Activated T-helper 2 cell treated with anti-CD3 and anti-CD28 coated beads, Interferon-gamma antibody, Interleukin-2, Interleukin-4, amounts not matched to agents 10 μg/mL and 5 μg/mL and 100 μg/mL, durations not matched to agents 14 hours and 24 hours and 36 hours (primary cell): ENCODE measurements at regions of chr11 and their contacts with region 1.

Region 1: GRCh38 chr11:119356349-119357031 is 10.0 kb upstream of the MFRP start:
- DNase-seq: peak; percentile 68
- H3K4me3 Mint-ChIP-seq: peak overlapping the region; percentile 82
- H3K27ac Mint-ChIP-seq: peak overlapping the region; percentile 71
- H3K4me1 Mint-ChIP-seq: peaks cover 17% of the 10 kb centered on the region
- H3K27me3 Mint-ChIP-seq: peaks cover 12% of the 10 kb centered on the region

Region 2: DNA sequence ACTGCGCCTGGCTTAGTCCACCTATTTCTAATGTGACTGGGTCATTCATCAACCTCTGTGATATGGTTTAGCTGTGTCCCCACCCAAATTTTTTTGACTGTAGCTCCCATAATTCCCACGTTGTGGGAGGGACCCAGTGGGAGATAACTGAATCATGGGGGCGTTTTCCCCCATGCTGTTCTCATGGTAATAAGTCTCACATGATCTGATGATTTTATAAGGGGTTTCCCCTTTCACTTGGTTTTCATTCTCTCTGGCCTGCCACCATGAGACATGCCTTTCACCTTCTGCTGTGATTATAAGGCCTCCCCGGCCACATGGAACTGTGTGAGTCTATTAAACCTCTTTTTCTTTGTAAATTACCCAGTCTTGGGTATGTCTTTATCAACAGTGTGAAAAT is 349.8 kb before region 1 on chr11:
- intact Hi-C with region 1: no loop called
- DNase-seq: no peak
- H3K4me3 Mint-ChIP-seq: no peak overlapping the region
- H3K27ac Mint-ChIP-seq: no peak overlapping the region
- H3K4me1 Mint-ChIP-seq: peaks cover 2% of the 10 kb centered on the region
- H3K27me3 Mint-ChIP-seq: no peaks in the 10 kb centered on the region

Region 3: DNA sequence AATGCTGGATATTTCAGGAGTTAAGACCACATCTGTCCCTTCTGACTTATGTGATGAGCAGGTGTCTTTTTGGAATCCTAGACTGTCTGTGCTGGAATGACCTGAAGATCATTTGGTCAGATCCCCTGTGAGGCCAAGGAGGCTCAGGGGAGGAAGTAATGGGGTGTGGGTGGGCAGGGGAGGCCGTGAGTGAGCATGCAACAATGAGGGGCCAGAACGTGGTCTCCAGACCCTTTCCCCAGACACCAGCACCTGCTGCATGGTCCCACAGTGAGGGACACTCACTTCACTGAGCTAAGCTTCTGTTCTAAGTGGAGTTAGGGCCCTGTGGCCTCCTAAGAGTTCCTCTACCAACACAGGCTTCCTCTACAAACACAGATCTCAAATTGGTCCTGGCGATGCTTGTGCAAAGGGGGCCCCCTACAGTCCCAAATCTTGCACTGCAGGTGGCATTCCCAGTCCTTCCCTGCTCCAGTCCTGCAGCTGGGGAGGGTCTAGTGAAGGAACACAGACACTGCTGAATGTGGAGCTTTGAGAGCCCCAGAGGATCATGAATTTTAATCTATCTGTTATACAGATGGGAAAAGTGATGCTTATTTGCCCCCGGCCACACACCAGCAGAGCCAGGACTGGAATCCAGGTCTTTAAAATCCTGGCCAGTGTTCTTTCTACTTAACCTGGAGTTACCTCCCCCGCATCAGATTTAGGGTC is 17.6 kb after region 1 on chr11:
- intact Hi-C with region 1: loop called (anchors 1 kb)
- DNase-seq: no peak
- H3K4me3 Mint-ChIP-seq: no peak overlapping the region
- H3K27ac Mint-ChIP-seq: no peak overlapping the region
- H3K4me1 Mint-ChIP-seq: peaks cover 4% of the 10 kb centered on the region
- H3K27me3 Mint-ChIP-seq: no peaks in the 10 kb centered on the region

Region 4: DNA sequence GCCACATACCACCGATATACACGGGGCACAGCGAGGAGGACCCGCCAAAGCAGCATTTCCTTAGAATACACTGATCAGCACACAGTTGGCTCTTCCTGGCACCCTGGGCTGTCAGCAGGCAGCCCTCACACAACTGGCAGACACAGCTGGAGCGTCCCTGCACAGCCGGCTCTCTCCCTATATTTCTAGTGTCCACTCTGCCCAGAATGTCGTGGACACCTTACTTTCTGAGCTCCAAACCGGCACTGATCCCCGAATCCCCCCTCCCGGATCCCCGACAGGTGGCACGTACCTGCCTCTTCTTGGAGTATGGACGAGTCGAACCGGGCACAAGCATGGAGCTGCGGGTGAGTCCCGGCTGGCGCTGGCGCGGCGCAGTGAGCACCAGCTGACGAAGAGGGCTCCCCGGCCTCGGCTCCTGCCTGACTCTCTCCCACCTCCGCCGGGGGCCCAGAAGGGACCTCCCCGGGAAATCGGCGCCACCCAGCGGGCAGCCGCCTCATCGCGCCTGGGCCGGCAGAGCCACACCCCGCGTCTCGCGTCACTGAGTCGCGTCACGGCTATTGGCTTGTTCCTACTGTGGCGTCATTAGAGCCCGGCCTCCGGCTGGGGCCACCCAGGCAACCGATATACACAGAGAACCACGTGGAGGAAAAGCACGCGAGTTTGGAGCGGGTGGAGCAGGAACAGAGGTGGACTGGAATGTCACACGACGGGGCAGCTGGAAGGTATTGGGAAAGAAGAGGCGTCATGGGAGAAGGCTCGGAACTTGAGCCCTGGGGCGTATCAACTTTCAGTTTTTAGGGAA is 24.9 kb after region 1 on chr11 and contains the start of gene USP2:
- intact Hi-C with region 1: loop called (anchors 1 kb)
- DNase-seq: peak; percentile 95
- H3K4me3 Mint-ChIP-seq: no peak within 1 kb of the TSS
- H3K27ac Mint-ChIP-seq: no peak within 1 kb of the TSS
- H3K4me1 Mint-ChIP-seq: peaks cover 12% of the 10 kb centered on the region
- H3K27me3 Mint-ChIP-seq: peaks cover 3% of the 10 kb centered on the region
- total RNA-seq, gene USP2: 1.0 and 1.1 TPM in 2 replicates

Region 5: GRCh38 chr11:119474682-119475596 is 118.4 kb after region 1 on chr11:
- intact Hi-C with region 1: loop called (anchors 1 kb)
- DNase-seq: peak; percentile 27
- H3K4me3 Mint-ChIP-seq: no peak overlapping the region
- H3K27ac Mint-ChIP-seq: no peak overlapping the region
- H3K4me1 Mint-ChIP-seq: peaks cover 4% of the 10 kb centered on the region
- H3K27me3 Mint-ChIP-seq: peaks cover 1% of the 10 kb centered on the region